Posterior vena cava (tissue), 2 donors: ENCODE measurements at regions of chr3 and their contacts with region 1.

Region 1: GRCh38 chr3:17755836-17756235 is 13.4 kb upstream of the TBC1D5 start:
- DNase-seq: no peak

Region 2: GRCh38 chr3:17639765-17640164 is 116.1 kb before region 1 on chr3:
- intact Hi-C with region 1: no loop called
- DNase-seq: no peak

Region 3: DNA sequence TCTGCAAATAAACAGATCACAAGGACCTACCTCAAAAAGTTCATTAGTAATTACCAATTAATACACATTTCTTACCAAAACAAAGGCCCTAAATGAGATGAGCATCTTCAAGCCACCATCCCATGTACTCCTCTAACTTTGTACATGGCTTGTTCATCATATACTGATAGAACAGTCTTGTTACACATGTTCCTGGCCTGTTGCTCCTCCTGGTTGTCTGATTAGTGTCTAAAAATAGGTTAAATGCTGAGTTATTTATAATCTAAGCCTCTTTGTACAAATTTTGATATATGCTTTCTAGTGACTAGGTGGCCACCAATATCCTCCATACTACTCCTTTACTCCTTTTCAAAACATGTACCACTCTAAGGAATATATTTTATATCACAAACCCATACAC is 38.4 kb before region 1 on chr3:
- intact Hi-C with region 1: no loop called
- DNase-seq: no peak

Region 4: GRCh38 chr3:17782751-17783150 is 26.9 kb after region 1 on chr3:
- intact Hi-C with region 1: loop called in 1 of 2 experiments (anchors 1 kb)
- DNase-seq: no peak

Region 5: GRCh38 chr3:17810759-17811158 is 54.9 kb after region 1 on chr3:
- intact Hi-C with region 1: no loop called
- DNase-seq: no peak